ENCODE measurements at regions of chr5 and their contacts with region 1.

Region 1: GRCh38 chr5:83430130-83431010 is 41.2 kb upstream of the VCAN start:
- DNase-seq: peak; percentile 67 to 79
- H3K4me3 ChIP-seq: no peak overlapping the region
- H3K4me1 ChIP-seq: 0 out of 2 replicates have a peak, but pooled peaks cover 2% of the 10 kb centered on the region
- H3K27me3 ChIP-seq: peaks cover 4% of the 10 kb centered on the region; the same call in 1 of the 2 replicates

Region 2: DNA sequence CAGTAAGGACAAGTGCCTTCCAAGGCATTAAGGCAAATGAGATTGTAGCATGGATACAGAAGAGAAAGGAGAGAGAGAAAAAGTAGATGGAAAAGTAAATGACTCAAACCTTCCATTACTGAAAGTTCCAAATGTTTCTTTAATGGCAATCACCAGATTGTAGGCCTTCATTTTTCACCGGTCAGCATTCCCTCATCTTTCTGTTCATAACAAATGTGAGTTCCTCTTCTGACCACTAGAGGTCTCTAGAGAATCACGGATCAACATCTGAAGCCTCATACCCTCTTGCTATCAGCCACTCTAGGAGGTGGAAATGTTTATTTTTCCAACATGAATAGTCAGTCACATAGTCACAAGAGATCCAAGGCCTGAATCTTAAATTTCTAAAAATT is 1078.6 kb before region 1 on chr5:
- in situ Hi-C with region 1: loop called (anchors 25 kb)
- DNase-seq: peak in 1 of 2 experiments; percentile 50
- H3K4me3 ChIP-seq: no peak overlapping the region
- H3K4me1 ChIP-seq: no peaks in the 10 kb centered on the region
- H3K27me3 ChIP-seq: no peaks in the 10 kb centered on the region

Region 3: GRCh38 chr5:82641331-82642003 is 788.9 kb before region 1 on chr5:
- in situ Hi-C with region 1: loop called (anchors 25 kb)
- DNase-seq: peak; percentile 41 to 76
- H3K4me3 ChIP-seq: no peak overlapping the region
- H3K4me1 ChIP-seq: no peaks in the 10 kb centered on the region
- H3K27me3 ChIP-seq: peaks cover 5% of the 10 kb centered on the region; the same call in 1 of the 2 replicates